PC-9 (cell line): ENCODE measurements at regions of chr6 and their contacts with region 1.

Region 1: GRCh38 chr6:117602151-117602898 is at the start of gene GOPC:
- DNase-seq: peak; percentile 94 to 97
- H3K4me3 ChIP-seq: peak within 1 kb of the TSS; percentile 58
- H3K27ac ChIP-seq: peak within 1 kb of the TSS; percentile 62
- H3K4me1 ChIP-seq: peaks cover 31% of the 10 kb centered on the region; the same call in 1 of the 2 replicates
- H3K27me3 ChIP-seq: no peaks in the 10 kb centered on the region
- CTCF ChIP-seq: 0 out of 2 replicates have a peak, but pooled peaks have one; percentile 33
- total RNA-seq, gene GOPC: 10.8 and 14.1 TPM in 2 replicates

Region 2: DNA sequence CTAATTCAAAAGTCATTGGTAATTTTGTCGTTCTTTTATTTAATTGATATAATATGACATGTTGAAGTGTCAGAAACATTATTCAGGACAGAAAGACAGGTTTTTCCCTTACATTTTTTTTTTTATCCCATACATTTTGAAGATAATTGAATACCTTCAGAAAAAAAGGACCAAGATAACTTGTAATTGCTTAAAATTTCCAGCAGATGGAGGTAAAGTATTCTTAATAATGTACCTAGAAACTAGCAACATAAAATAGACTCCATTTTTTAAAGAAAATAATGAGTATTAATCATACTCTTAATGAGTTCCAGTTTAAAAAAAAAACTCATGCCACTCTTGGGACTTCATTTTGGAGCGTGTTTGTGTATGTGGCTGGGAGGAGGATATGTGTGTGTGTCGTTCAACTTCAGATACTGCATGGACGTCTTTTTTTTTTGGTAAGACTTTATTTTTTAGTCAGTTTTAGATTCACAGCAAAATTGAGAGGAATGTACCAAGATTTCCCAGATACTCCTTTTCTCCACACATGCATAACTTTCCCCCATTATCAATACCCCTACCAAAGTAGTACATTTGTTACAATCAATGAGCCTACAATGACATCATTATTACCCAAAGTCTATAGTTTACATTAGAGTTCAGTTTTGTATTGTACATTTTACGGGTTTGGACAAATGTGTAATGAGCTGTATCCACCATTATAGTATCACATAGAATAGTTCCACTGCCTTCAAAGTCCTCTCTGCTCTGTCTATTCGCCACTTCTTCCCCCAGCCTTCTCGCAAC is 256.0 kb before region 1 on chr6:
- CTCF ChIA-PET with region 1: no interaction called
- POLR2A ChIA-PET with region 1: interaction called, 5 read pairs
- intact Hi-C with region 1: loop called (anchors 1 kb)
- DNase-seq: peak in 1 of 2 experiments; percentile 44
- H3K4me3 ChIP-seq: no peak overlapping the region
- H3K27ac ChIP-seq: no peak overlapping the region
- H3K4me1 ChIP-seq: no peaks in the 10 kb centered on the region
- H3K27me3 ChIP-seq: no peaks in the 10 kb centered on the region
- CTCF ChIP-seq: peak; percentile 89

Region 3: GRCh38 chr6:117399924-117400323 is 202.4 kb before region 1 on chr6:
- CTCF ChIA-PET with region 1: interaction called, 7 read pairs
- POLR2A ChIA-PET with region 1: no interaction called
- intact Hi-C with region 1: loop called (anchors 2 kb)
- DNase-seq: no peak
- H3K4me3 ChIP-seq: no peak overlapping the region
- H3K27ac ChIP-seq: no peak overlapping the region
- H3K4me1 ChIP-seq: no peaks in the 10 kb centered on the region
- H3K27me3 ChIP-seq: no peaks in the 10 kb centered on the region
- CTCF ChIP-seq: peak; percentile 45; the same call in 1 of the 2 replicates

Region 4: DNA sequence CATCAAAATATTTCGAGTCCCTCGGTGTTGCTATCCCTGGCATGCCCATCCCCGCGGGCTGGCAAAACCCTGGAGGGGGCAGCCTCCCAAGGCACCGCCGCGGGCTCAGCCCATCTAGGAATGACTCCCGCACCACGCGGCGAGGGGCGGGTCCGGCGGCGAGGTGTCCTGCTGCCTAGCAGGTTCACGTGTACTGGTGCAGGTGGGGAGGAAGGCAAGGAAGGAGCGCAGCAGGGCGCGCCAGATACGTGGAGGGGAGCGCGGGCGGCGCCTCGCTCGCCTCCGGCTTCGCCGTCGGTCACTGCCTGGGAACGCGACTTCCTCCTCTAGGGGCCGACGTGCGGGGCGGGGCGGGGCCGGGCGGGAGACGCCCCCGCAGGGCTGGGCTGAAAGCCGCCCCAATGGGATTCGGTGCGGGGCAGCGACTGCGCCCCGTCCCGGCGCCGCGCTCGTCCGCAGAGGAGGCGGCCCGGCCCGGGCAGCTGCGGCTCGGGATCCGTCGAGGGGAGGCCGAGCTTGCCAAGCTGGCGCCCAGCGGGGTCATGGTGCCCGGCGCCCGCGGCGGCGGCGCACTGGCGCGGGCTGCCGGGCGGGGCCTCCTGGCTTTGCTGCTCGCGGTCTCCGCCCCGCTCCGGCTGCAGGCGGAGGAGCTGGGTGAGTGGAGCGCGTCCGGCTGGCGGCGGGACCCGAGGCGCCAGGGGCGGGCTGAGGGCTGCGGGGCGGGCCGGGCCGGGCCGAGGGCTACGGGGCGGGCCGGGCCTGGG is 119.9 kb before region 1 on chr6 and contains the start of gene DCBLD1:
- CTCF ChIA-PET with region 1: no interaction called
- POLR2A ChIA-PET with region 1: interaction called, 7 read pairs
- intact Hi-C with region 1: loop called (anchors 1 kb)
- DNase-seq: peak; percentile 80 to 83
- H3K4me3 ChIP-seq: peak within 1 kb of the TSS; percentile 93
- H3K27ac ChIP-seq: peak within 1 kb of the TSS; percentile 45
- H3K4me1 ChIP-seq: peaks cover 16% of the 10 kb centered on the region
- H3K27me3 ChIP-seq: no peaks in the 10 kb centered on the region
- CTCF ChIP-seq: no peak; the same call in 1 of the 2 replicates
- total RNA-seq, gene DCBLD1: 5.7 and 6.1 TPM in 2 replicates

Region 5: DNA sequence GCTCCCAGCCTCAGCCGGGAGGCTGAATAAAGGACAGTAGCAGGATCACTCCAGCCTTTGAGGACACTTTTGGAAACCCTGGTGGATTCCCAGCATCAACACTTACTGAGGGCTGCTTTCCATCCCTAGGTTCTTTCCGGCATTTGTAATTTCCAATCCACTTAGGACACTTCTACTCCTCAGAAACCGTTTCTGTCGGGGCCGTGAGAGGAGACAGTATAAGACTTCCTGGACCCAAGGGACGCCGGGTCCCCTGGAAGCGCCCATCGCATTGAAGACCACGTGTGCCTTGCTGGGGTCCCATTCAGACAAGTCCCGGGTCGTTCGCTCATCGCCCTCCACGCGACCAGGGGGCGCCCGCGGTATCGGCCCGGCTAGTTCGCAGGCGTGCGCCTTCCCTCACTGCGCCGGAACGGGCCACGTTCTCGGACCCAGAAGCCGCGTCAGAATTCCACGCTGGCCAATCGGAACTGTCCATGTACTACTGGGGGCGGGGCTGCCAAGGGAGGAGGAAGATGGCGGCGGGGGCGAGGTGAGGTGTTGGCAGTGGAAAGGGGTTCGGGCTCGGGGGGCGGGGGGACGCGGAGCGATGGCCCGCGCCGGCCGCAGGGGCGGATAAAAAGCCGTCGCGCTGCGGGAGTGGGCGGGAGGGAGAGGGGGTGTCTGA is 72.8 kb after region 1 on chr6 and contains the start of gene NUS1:
- CTCF ChIA-PET with region 1: no interaction called
- POLR2A ChIA-PET with region 1: no interaction called
- intact Hi-C with region 1: loop called (anchors 2 kb)
- DNase-seq: peak; percentile 95 to 96
- H3K4me3 ChIP-seq: peak within 1 kb of the TSS; percentile 78
- H3K27ac ChIP-seq: peak within 1 kb of the TSS; percentile 49
- H3K4me1 ChIP-seq: peaks cover 26% of the 10 kb centered on the region
- H3K27me3 ChIP-seq: no peaks in the 10 kb centered on the region
- CTCF ChIP-seq: peak; percentile 85
- total RNA-seq, gene NUS1: 17.0 and 22.2 TPM in 2 replicates

Region 6: GRCh38 chr6:117687021-117687648 is 84.8 kb after region 1 on chr6:
- CTCF ChIA-PET with region 1: no interaction called
- POLR2A ChIA-PET with region 1: no interaction called
- intact Hi-C with region 1: no loop called
- DNase-seq: no peak
- H3K4me3 ChIP-seq: no peak overlapping the region
- H3K27ac ChIP-seq: no peak overlapping the region
- H3K4me1 ChIP-seq: no peaks in the 10 kb centered on the region
- H3K27me3 ChIP-seq: no peaks in the 10 kb centered on the region
- CTCF ChIP-seq: no peak